Brain microvascular endothelial cell (primary cell): ENCODE measurements at regions of chr11 and their contacts with region 1.

Region 1: GRCh38 chr11:60906132-60906972 is at the start of gene PRPF19:
- DNase-seq: peak; percentile 95
- H3K4me3 ChIP-seq: peak within 1 kb of the TSS; percentile 83
- H3K27ac ChIP-seq: peak within 1 kb of the TSS; percentile 83
- H3K27me3 ChIP-seq: no peaks in the 10 kb centered on the region
- CTCF ChIP-seq: no peak

Region 2: GRCh38 chr11:60257956-60258722 is 648.2 kb before region 1 on chr11:
- in situ Hi-C with region 1: no loop called
- DNase-seq: no peak
- H3K4me3 ChIP-seq: no peak overlapping the region
- H3K27ac ChIP-seq: no peak overlapping the region
- H3K27me3 ChIP-seq: no peaks in the 10 kb centered on the region
- CTCF ChIP-seq: no peak

Region 3: GRCh38 chr11:60378354-60378753 is 528.0 kb before region 1 on chr11 and contains the start of gene MS4A7:
- in situ Hi-C with region 1: no loop called
- DNase-seq: no peak
- H3K4me3 ChIP-seq: no peak within 1 kb of the TSS
- H3K27ac ChIP-seq: no peak within 1 kb of the TSS
- H3K27me3 ChIP-seq: no peaks in the 10 kb centered on the region
- CTCF ChIP-seq: no peak

Region 4: GRCh38 chr11:60775420-60775961 is 130.9 kb before region 1 on chr11:
- in situ Hi-C with region 1: loop called (anchors 10 kb)
- DNase-seq: peak; percentile 89
- H3K4me3 ChIP-seq: no peak overlapping the region
- H3K27ac ChIP-seq: no peak overlapping the region
- H3K27me3 ChIP-seq: no peaks in the 10 kb centered on the region
- CTCF ChIP-seq: peak; percentile 94

Region 5: GRCh38 chr11:61071208-61071681 is 164.9 kb after region 1 on chr11:
- in situ Hi-C with region 1: no loop called
- DNase-seq: no peak
- H3K4me3 ChIP-seq: no peak overlapping the region
- H3K27ac ChIP-seq: no peak overlapping the region
- H3K27me3 ChIP-seq: no peaks in the 10 kb centered on the region
- CTCF ChIP-seq: no peak